ENCODE measurements at regions of chr7 and their contacts with region 1.

Region 1: GRCh38 chr7:142459551-142459963 is 201.7 kb upstream of the PRSS58 start:
- DNase-seq: no peak
- H3K4me3 Mint-ChIP-seq: no peak overlapping the region
- H3K27ac Mint-ChIP-seq: peak overlapping the region; percentile 34
- H3K4me1 Mint-ChIP-seq: peaks cover 56% of the 10 kb centered on the region
- H3K27me3 Mint-ChIP-seq: peaks cover 9% of the 10 kb centered on the region

Region 2: GRCh38 chr7:141585592-141586510 is 873.7 kb before region 1 on chr7:
- intact Hi-C with region 1: no loop called
- DNase-seq: no peak
- H3K4me3 Mint-ChIP-seq: peak overlapping the region; percentile 75
- H3K27ac Mint-ChIP-seq: peak overlapping the region; percentile 94
- H3K4me1 Mint-ChIP-seq: peaks cover 74% of the 10 kb centered on the region
- H3K27me3 Mint-ChIP-seq: no peaks in the 10 kb centered on the region

Region 3: DNA sequence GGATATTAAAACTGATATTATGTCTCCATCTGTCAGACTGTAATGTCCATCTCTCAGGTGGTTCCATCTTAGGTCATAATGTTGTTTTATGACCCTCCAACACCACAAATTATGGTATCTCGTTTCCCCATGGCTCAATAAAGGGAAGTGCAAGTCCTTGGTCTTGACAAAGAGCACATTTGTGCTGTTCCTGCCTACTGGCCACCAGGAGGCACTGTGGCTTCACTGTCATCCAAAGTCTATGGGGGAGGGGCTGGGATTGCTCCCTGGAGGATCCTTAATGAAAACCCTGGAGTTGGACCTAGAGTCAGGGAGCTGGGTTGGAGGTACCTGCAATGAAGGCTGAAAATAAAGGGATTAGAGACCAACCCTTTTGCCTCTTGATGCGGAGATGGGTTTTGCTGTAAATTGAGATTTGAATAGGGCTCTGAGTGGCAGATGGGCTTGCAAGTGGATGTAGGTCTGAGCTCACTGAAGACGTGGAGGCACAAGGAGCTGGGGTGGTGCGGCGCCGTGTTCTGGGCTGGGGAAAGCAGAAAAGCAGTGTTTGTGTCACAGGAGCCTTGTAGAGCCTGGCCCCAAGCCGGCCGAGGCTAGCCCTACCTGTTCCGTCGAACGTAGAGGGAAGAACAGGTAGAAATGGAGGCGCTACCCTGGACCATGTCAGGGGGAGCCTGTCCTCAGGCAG is 21.2 kb before region 1 on chr7:
- intact Hi-C with region 1: loop called (anchors 2 kb)
- DNase-seq: no peak
- H3K4me3 Mint-ChIP-seq: no peak overlapping the region
- H3K27ac Mint-ChIP-seq: peak overlapping the region; percentile 4
- H3K4me1 Mint-ChIP-seq: peaks cover 55% of the 10 kb centered on the region
- H3K27me3 Mint-ChIP-seq: no peaks in the 10 kb centered on the region

Region 4: DNA sequence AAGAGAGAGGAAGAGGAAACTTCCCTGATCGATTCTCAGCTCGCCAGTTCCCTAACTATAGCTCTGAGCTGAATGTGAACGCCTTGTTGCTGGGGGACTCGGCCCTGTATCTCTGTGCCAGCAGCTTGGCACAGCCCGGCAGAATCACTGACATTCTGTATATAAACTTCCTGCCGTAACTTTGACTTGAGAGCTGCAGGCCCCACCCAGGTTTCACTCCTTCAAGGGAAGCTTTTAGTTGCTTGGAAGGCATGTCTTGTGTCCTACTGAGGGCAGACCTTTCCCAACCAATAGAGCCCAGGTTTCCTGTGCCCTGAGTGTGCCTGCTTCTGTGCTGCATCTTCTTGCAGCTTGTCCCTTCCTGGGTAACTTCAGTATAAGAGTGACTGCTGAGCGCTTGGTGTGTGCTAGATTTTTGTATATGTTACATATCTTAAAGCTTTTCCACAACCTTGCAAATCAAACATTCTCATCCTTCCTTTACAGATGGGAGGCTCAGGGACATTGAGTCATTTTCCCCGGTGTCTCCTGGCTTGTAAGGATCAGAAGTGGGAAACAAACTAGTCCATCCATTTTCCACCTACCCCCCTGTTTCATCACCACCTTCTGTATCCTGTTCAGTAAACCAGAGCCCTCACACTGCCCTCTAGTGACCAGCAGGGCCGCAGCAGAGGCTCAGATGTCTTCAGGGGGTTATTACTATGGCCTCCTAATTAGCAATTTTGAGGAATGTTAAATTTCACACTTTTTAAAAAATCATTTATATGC is 23.5 kb after region 1 on chr7:
- intact Hi-C with region 1: loop called (anchors 1 kb)
- DNase-seq: peak; percentile 28
- H3K4me3 Mint-ChIP-seq: peak overlapping the region; percentile 50
- H3K27ac Mint-ChIP-seq: peak overlapping the region; percentile 78
- H3K4me1 Mint-ChIP-seq: peaks cover 29% of the 10 kb centered on the region
- H3K27me3 Mint-ChIP-seq: peaks cover 3% of the 10 kb centered on the region

Region 5: GRCh38 chr7:142496545-142497041 is 37.0 kb after region 1 on chr7:
- intact Hi-C with region 1: loop called (anchors 5 kb)
- DNase-seq: no peak
- H3K4me3 Mint-ChIP-seq: peak overlapping the region; percentile 32
- H3K27ac Mint-ChIP-seq: no peak overlapping the region
- H3K4me1 Mint-ChIP-seq: peaks cover 31% of the 10 kb centered on the region
- H3K27me3 Mint-ChIP-seq: peaks cover 7% of the 10 kb centered on the region

Region 6: GRCh38 chr7:142587578-142588191 is 128.1 kb after region 1 on chr7:
- intact Hi-C with region 1: no loop called
- DNase-seq: no peak
- H3K4me3 Mint-ChIP-seq: no peak overlapping the region
- H3K27ac Mint-ChIP-seq: no peak overlapping the region
- H3K4me1 Mint-ChIP-seq: peaks cover 9% of the 10 kb centered on the region
- H3K27me3 Mint-ChIP-seq: no peaks in the 10 kb centered on the region

Measured in activated T-helper 1 cell treated with anti-CD3 and anti-CD28 coated beads, Interleukin-12 subunit alpha, Interleukin-12 subunit beta, Interleukin-2, Interleukin-4 antibody, amounts not matched to agents 30 ng/mL and 10 ng/mL and 1 ng/mL, durations not matched to agents 14 hours and 24 hours and 36 hours (primary cell).